ENCODE measurements at regions of chr2 and their contacts with region 1.

Region 1: GRCh38 chr2:218898109-218898878 is 17.6 kb downstream of the WNT10A start:
- DNase-seq: peak in 1 of 2 donors; percentile 40
- ATAC-seq: peak; percentile 57 to 71
- H3K4me3 ChIP-seq: peak overlapping the region in 3 of 4 donors; percentile 8 to 34 (median 25)
- H3K27ac ChIP-seq: no peak overlapping the region
- H3K4me1 ChIP-seq: peaks cover 9% of the 10 kb centered on the region in 2 donors
- H3K27me3 ChIP-seq: peaks cover 64 to 78% (median 68%) of the 10 kb centered on the region in 3 donors
- CTCF ChIP-seq: peak; percentile 83 to 96 (median 92)
- POLR2A ChIP-seq: no peak

Region 2: GRCh38 chr2:218876562-218877219 is 21.6 kb before region 1 on chr2:
- in situ Hi-C with region 1: no loop called
- intact Hi-C with region 1: loop called (anchors 1 kb)
- DNase-seq: peak in 1 of 2 donors; percentile 37
- ATAC-seq: peak; percentile 62 to 71
- H3K4me3 ChIP-seq: no peak overlapping the region
- H3K27ac ChIP-seq: no peak overlapping the region
- H3K4me1 ChIP-seq: peaks cover 0 to 10% of the 10 kb centered on the region in 2 donors
- H3K27me3 ChIP-seq: peaks cover 63 to 75% (median 75%) of the 10 kb centered on the region in 3 donors
- CTCF ChIP-seq: peak; percentile 78 to 90 (median 84)
- POLR2A ChIP-seq: no peak

Region 3: GRCh38 chr2:219002395-219003266 is 104.3 kb after region 1 on chr2:
- in situ Hi-C with region 1: no loop called
- intact Hi-C with region 1: no loop called
- DNase-seq: no peak
- ATAC-seq: no peak
- H3K4me3 ChIP-seq: peak overlapping the region in 1 of 4 donors; percentile 36
- H3K27ac ChIP-seq: no peak overlapping the region
- H3K4me1 ChIP-seq: peaks cover 0 to 15% of the 10 kb centered on the region in 2 donors
- H3K27me3 ChIP-seq: peaks cover 50 to 63% (median 56%) of the 10 kb centered on the region in 3 donors
- CTCF ChIP-seq: peak in 2 of 5 experiments; percentile 39 to 59
- POLR2A ChIP-seq: no peak